Activated T-helper 1 cell treated with anti-CD3 and anti-CD28 coated beads, Interleukin-12 subunit alpha, Interleukin-12 subunit beta, Interleukin-2, Interleukin-4 antibody, amounts not matched to agents 30 ng/mL and 10 ng/mL and 1 ng/mL, durations not matched to agents 14 hours and 24 hours and 36 hours (primary cell): ENCODE measurements at regions of chr12 and their contacts with region 1.

Region 1: GRCh38 chr12:92145731-92146496 is at the start of gene BTG1:
- DNase-seq: peak; percentile 99
- H3K4me3 Mint-ChIP-seq: peak within 1 kb of the TSS; percentile 94
- H3K27ac Mint-ChIP-seq: peak within 1 kb of the TSS; percentile 97
- H3K4me1 Mint-ChIP-seq: peaks cover 51% of the 10 kb centered on the region
- H3K27me3 Mint-ChIP-seq: peaks cover 2% of the 10 kb centered on the region
- total RNA-seq, gene BTG1: 86.4 and 87.9 TPM in 2 replicates

Region 2: DNA sequence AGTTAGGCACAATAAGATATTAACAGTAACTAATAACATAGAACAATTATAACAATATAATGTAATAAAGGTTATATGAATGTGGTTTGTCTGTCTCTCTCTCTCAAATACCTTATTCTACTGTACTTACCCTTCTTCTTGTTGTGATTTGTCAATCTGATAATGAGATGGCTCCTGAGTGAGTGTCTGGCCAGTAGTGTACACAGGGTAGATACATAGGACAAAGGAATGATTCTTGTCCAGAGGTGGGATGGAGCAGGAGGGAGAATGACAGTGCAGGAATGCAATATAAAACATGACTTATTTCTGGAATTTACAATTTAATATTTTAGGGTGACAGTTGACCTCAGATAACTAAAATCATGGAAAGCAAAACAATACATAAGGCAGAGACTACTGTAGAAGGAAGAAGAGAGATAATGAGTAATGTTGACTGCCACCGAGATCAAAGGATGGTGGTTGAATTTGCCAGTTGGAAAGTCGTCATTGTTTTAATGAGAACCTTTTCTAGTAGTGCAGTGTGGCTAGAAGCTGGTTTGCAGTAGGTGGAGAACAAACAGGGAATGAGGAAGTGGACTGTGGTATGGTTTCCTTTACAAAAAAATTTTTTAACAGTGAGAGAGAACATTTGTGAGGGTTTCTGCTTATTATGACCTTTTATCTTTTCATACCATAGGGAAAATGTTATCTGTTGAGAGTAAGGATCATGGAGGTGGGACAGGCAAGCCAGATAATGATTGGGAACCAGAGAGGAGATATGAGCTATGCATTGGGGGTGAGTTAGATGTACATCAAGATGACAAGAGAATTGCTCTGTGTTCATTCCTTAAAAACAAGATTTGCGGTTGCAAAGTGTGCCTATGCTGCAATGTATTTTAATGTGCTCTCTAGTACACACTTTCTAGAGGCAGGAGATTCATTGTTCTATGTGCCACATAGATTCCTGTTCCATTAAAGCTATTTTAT is 458.6 kb before region 1 on chr12:
- intact Hi-C with region 1: loop called (anchors 1 kb)
- DNase-seq: peak; percentile 2
- H3K4me3 Mint-ChIP-seq: peak overlapping the region; percentile 54
- H3K27ac Mint-ChIP-seq: peak overlapping the region; percentile 83
- H3K4me1 Mint-ChIP-seq: peaks cover 22% of the 10 kb centered on the region
- H3K27me3 Mint-ChIP-seq: no peaks in the 10 kb centered on the region

Region 3: GRCh38 chr12:92065018-92065499 is 80.9 kb before region 1 on chr12:
- intact Hi-C with region 1: loop called (anchors 1 kb)
- DNase-seq: peak; percentile 31
- H3K4me3 Mint-ChIP-seq: peak overlapping the region; percentile 27
- H3K27ac Mint-ChIP-seq: peak overlapping the region; percentile 69
- H3K4me1 Mint-ChIP-seq: peaks cover 55% of the 10 kb centered on the region
- H3K27me3 Mint-ChIP-seq: no peaks in the 10 kb centered on the region

Region 4: DNA sequence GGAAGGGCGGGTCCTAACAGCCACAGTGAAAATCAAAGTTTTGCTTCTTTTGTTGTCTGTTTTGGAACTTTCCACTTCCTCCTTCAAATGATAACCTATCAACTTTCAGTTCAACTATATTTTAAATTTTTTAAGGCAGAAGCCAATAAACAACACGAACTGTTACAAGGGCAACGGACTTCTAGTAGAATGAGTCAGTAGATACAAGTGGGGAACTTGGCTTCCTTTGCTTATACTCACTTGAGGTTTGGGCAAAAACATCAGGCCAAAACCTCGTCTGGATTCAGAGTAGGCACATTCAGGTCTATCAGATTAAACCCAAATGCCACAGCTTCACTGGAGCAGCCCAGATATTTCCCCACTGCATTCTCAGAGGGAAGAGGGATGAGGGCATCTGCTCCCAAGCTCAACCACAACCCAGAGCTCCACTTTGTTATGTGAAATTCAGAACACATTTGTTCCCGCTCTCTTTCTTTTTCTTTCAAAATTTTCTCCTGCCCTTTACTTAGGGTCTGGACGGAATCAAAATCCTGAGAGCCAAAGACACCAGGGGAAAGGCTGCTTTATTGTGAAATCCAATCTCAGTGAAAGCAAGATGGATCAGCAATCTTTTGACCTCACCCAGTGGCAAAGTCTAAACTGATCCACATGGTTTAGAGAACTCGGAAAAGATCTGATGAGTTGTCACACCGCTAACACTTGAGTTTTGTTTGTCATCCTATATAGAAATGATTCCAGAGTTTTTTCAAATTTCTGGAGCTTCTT is 152.2 kb after region 1 on chr12:
- intact Hi-C with region 1: loop called (anchors 2 kb)
- DNase-seq: peak; percentile 7
- H3K4me3 Mint-ChIP-seq: peak overlapping the region; percentile 49
- H3K27ac Mint-ChIP-seq: peak overlapping the region; percentile 88
- H3K4me1 Mint-ChIP-seq: no peaks in the 10 kb centered on the region
- H3K27me3 Mint-ChIP-seq: no peaks in the 10 kb centered on the region

Region 5: DNA sequence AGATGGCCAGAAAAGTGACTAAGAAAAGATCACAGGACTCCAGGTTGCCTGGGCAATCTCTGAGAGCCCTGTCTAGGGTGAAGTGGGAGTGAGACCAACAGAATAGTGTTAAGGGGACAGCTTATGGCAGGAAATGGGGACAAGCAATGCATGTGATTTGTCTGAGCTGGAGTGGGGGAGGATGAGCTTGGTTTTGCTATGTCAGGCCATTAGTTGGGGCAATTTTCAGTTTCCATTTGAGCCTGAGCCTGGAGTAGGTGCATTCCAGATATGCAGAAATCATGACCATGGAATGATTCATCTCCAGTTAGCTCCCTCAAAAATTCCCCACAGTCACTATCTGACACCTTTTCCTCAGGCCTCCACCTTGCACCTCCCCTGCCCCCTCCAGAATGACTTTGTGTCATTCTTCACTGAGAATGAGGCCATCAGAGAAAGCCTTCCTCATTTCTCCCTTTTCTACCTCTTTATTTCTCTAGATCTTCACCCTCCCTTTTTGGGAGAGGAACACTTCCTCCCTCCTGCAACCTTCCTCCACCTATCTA is 406.0 kb after region 1 on chr12:
- intact Hi-C with region 1: loop called (anchors 1 kb)
- DNase-seq: no peak
- H3K4me3 Mint-ChIP-seq: no peak overlapping the region
- H3K27ac Mint-ChIP-seq: no peak overlapping the region
- H3K4me1 Mint-ChIP-seq: peaks cover 31% of the 10 kb centered on the region
- H3K27me3 Mint-ChIP-seq: no peaks in the 10 kb centered on the region

Region 6: GRCh38 chr12:93441617-93442410 is 1295.9 kb after region 1 on chr12 and contains the start of gene UBE2N:
- intact Hi-C with region 1: loop called (anchors 5 kb)
- DNase-seq: peak; percentile 95
- H3K4me3 Mint-ChIP-seq: peak within 1 kb of the TSS; percentile 96
- H3K27ac Mint-ChIP-seq: peak within 1 kb of the TSS; percentile 99
- H3K4me1 Mint-ChIP-seq: peaks cover 51% of the 10 kb centered on the region
- H3K27me3 Mint-ChIP-seq: no peaks in the 10 kb centered on the region
- total RNA-seq, gene UBE2N: 231 and 239 TPM in 2 replicates